Caco-2 (cell line): ENCODE measurements at regions of chr16 and their contacts with region 1.

Region 1: GRCh38 chr16:67226804-67227557 is at the start of gene TMEM208:
- DNase-seq: peak; percentile 100
- H3K4me3 ChIP-seq: peak within 1 kb of the TSS; percentile 96
- H3K4me3 Mint-ChIP-seq: peak within 1 kb of the TSS; percentile 98
- H3K27ac Mint-ChIP-seq: peak within 1 kb of the TSS; percentile 98
- H3K4me1 ChIP-seq: peaks cover 7% of the 10 kb centered on the region; the same call in 1 of the 2 replicates
- H3K4me1 Mint-ChIP-seq: peaks cover 20% of the 10 kb centered on the region
- H3K27me3 ChIP-seq: no peaks in the 10 kb centered on the region
- H3K27me3 Mint-ChIP-seq: no peaks in the 10 kb centered on the region
- CTCF ChIP-seq: peak in 1 of 2 experiments; percentile 28
- total RNA-seq, gene TMEM208: 63.8 and 69.7 TPM in 2 replicates

Region 2: DNA sequence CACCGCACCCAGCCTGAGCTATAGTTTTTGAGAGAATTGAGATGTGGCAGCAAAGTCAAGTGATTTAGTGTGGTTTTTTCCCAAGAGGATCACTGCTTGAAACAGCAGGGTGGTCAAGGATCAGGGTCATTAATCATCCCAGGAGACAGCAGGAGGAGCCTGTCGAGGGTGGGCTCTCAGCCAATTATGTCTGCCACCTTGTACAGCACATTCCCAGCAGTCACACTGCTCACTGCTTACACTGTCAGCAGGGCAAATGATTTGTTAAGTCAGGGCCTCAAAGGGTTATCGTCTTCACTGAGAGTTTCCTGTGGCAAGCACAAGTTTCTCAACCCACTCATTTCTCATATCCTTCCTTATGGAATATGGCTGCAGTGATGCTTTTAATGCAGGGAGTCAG is 89.4 kb before region 1 on chr16:
- CTCF ChIA-PET with region 1: no interaction called
- POLR2A ChIA-PET with region 1: no interaction called
- intact Hi-C with region 1: no loop called
- DNase-seq: no peak
- H3K4me3 ChIP-seq: no peak overlapping the region
- H3K4me3 Mint-ChIP-seq: no peak overlapping the region
- H3K27ac Mint-ChIP-seq: no peak overlapping the region
- H3K4me1 ChIP-seq: no peaks in the 10 kb centered on the region
- H3K4me1 Mint-ChIP-seq: no peaks in the 10 kb centered on the region
- H3K27me3 ChIP-seq: no peaks in the 10 kb centered on the region
- H3K27me3 Mint-ChIP-seq: no peaks in the 10 kb centered on the region
- CTCF ChIP-seq: no peak

Region 3: GRCh38 chr16:67164599-67165061 is 62.4 kb before region 1 on chr16 and contains the start of gene HSF4:
- CTCF ChIA-PET with region 1: no interaction called
- POLR2A ChIA-PET with region 1: no interaction called
- intact Hi-C with region 1: no loop called
- DNase-seq: no peak
- H3K4me3 ChIP-seq: no peak within 1 kb of the TSS
- H3K4me3 Mint-ChIP-seq: no peak within 1 kb of the TSS
- H3K27ac Mint-ChIP-seq: no peak within 1 kb of the TSS
- H3K4me1 ChIP-seq: peaks cover 11% of the 10 kb centered on the region
- H3K4me1 Mint-ChIP-seq: peaks cover 7% of the 10 kb centered on the region
- H3K27me3 ChIP-seq: no peaks in the 10 kb centered on the region
- H3K27me3 Mint-ChIP-seq: no peaks in the 10 kb centered on the region
- CTCF ChIP-seq: no peak
- total RNA-seq, gene HSF4: 39.4 and 52.0 TPM in 2 replicates

Region 4: DNA sequence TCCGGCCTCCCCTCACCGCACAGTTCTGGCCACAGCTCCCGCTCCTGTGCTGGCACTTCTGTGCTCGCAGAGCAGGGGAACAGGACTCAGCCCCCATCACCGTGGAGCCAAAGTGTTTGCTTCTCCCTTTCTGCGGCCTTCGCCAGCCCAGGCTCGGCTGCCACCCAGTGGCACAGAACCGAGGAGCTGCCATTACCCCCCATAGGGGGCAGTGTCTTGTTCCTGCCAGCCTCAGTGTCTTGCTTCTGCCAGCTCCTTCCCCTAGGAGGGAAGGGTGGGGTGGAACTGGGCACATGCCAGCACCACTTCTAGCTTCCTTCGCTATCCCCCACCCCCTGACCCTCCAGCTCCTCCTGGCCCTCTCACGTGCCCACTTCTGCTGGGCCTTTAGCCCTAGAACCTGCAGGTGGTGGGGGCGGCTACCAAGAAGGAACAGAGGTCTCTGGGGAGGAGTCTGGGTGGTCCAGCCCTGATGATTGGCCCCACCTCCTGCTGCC is 28.7 kb before region 1 on chr16:
- CTCF ChIA-PET with region 1: interaction called, 7 read pairs
- POLR2A ChIA-PET with region 1: interaction called, 3 read pairs
- intact Hi-C with region 1: loop called (anchors 2 kb)
- DNase-seq: peak in 1 of 2 experiments; percentile 53
- H3K4me3 ChIP-seq: 0 out of 2 replicates have a peak overlapping the region, but pooled peaks have one; percentile 11
- H3K4me3 Mint-ChIP-seq: peak overlapping the region; percentile 84
- H3K27ac Mint-ChIP-seq: no peak overlapping the region
- H3K4me1 ChIP-seq: peaks cover 27% of the 10 kb centered on the region
- H3K4me1 Mint-ChIP-seq: peaks cover 23% of the 10 kb centered on the region
- H3K27me3 ChIP-seq: no peaks in the 10 kb centered on the region
- H3K27me3 Mint-ChIP-seq: no peaks in the 10 kb centered on the region
- CTCF ChIP-seq: peak; percentile 40 to 58

Region 5: DNA sequence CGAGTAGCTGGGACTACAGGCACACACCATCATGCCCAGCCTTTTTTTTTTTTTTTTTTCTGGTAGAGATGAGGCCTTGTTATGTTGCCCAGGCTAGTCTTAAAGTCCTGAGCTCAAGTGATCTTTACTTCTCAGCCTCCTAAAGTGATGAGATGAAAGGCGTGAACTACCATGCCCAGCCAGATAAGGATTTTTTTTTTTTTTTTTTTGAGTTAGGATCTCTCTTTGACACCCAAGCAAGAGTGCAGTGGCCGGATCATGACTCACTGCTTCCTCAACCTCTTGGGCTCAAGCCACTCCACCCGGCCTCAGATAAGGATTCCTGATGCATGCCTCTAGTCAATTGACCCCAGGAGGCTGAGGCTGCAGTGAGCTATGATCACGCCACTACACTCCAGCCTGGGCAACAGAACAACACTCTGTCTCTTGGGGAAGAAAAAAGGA is 41.2 kb after region 1 on chr16:
- CTCF ChIA-PET with region 1: interaction called, 4 read pairs
- POLR2A ChIA-PET with region 1: interaction called, 10 read pairs
- intact Hi-C with region 1: no loop called
- DNase-seq: peak; percentile 73 to 90
- H3K4me3 ChIP-seq: no peak overlapping the region
- H3K4me3 Mint-ChIP-seq: no peak overlapping the region
- H3K27ac Mint-ChIP-seq: no peak overlapping the region
- H3K4me1 ChIP-seq: peaks cover 15% of the 10 kb centered on the region
- H3K4me1 Mint-ChIP-seq: peaks cover 9% of the 10 kb centered on the region
- H3K27me3 ChIP-seq: no peaks in the 10 kb centered on the region
- H3K27me3 Mint-ChIP-seq: no peaks in the 10 kb centered on the region
- CTCF ChIP-seq: no peak

Region 6: DNA sequence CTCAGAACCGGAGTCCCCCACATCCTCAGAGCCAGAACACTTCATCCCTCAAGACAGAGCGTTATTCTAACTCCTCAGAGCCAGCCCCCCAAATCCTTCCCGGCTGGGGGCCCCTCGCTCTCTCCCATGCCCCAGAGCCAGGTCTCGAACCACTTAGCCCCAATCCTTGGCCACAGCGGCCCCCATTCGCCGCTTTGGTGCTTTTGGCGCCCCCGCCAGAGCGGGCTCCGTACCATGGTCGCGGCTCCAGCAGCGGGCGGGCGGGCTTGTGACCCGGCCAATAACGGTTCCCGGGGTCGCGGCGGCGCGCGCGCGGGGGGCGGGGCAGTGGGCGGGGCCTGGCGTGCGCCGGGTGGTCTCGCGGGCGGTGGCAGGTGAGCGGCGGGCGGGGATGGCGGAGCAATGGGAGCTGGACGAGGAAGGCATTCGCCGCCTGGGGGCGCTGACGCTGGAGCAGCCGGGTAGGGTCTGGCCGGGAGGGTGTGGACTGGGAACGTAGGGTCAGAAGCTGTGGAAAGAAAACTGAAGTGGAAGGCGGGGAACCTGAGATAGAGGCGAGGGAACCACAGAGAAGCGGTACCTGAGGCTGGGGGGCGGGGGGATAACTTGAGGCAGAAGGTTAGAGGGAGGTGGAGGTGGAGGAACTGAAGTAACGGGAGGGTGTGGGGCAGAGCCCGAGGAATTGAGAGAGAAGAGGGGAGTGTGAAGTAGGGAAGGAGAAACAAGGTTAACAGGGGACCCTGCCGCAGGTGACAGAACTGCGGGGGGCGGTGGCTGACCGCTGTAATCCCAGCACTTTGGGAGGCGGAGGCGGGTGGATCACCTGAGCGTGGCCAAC is 99.7 kb after region 1 on chr16 and contains the starts of genes KCTD19 and LRRC36:
- CTCF ChIA-PET with region 1: no interaction called
- POLR2A ChIA-PET with region 1: interaction called, 10 read pairs
- intact Hi-C with region 1: no loop called
- DNase-seq: peak; percentile 62 to 72
- H3K4me3 ChIP-seq: peak within 1 kb of the TSS; percentile 35
- H3K4me3 Mint-ChIP-seq: peak within 1 kb of the TSS; percentile 60
- H3K27ac Mint-ChIP-seq: no peak within 1 kb of the TSS
- H3K4me1 ChIP-seq: peaks cover 22% of the 10 kb centered on the region
- H3K4me1 Mint-ChIP-seq: peaks cover 13% of the 10 kb centered on the region
- H3K27me3 ChIP-seq: no peaks in the 10 kb centered on the region
- H3K27me3 Mint-ChIP-seq: peaks cover 5% of the 10 kb centered on the region
- CTCF ChIP-seq: peak in 1 of 2 experiments; percentile 27
- total RNA-seq, gene KCTD19: not detected in 2 replicates
- total RNA-seq, gene LRRC36: 0.79 TPM in 1 of 2 replicates, not detected in the other